Mammary epithelial cell (primary cell): ENCODE measurements at regions of chr16 and their contacts with region 1.

Region 1: DNA sequence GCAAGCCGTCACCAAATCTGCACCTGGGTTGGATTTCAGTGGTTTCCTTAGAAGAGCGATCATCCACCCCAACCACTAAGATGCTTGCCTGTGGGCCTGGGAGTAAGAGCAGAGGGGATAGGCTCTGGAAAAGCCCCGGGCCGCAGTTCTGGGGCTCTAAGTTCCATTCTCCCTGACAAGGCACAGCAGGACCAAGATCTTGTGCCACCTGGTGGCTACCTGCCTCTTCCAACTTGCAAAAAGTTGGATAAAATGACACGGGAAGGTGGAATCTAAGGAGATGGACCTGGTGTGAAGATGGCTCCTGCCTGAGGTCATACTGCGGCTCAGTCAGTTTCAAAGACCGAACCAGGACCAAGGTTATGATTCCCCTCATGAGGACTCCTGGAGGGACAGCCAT is 42.3 kb downstream of the ABCC12 start:
- DNase-seq: no peak
- H3K4me3 ChIP-seq: no peak overlapping the region
- H3K27ac ChIP-seq: no peak overlapping the region
- H3K4me1 ChIP-seq: no peaks in the 10 kb centered on the region
- H3K27me3 ChIP-seq: no peaks in the 10 kb centered on the region
- CTCF ChIP-seq: peak; percentile 20 to 50

Region 2: GRCh38 chr16:47939690-47940089 is 173.8 kb before region 1 on chr16:
- CTCF ChIA-PET with region 1: no interaction called
- dilution Hi-C with region 1: no loop called
- in situ Hi-C with region 1: no loop called
- intact Hi-C with region 1: loop called (anchors 1 kb)
- DNase-seq: peak; percentile 41
- H3K4me3 ChIP-seq: no peak overlapping the region
- H3K27ac ChIP-seq: no peak overlapping the region
- H3K4me1 ChIP-seq: no peaks in the 10 kb centered on the region
- H3K27me3 ChIP-seq: no peaks in the 10 kb centered on the region
- CTCF ChIP-seq: peak in 1 of 2 donors; percentile 38

Region 3: GRCh38 chr16:48003226-48003907 is 110.1 kb before region 1 on chr16:
- CTCF ChIA-PET with region 1: no interaction called
- dilution Hi-C with region 1: no loop called
- in situ Hi-C with region 1: no loop called
- intact Hi-C with region 1: no loop called
- DNase-seq: peak; percentile 96
- H3K4me3 ChIP-seq: no peak overlapping the region
- H3K27ac ChIP-seq: peak overlapping the region; percentile 11
- H3K4me1 ChIP-seq: peaks cover 17% of the 10 kb centered on the region
- H3K27me3 ChIP-seq: no peaks in the 10 kb centered on the region
- CTCF ChIP-seq: no peak